PC-9 (cell line): ENCODE measurements at regions of chr3 and their contacts with region 1.

Region 1: DNA sequence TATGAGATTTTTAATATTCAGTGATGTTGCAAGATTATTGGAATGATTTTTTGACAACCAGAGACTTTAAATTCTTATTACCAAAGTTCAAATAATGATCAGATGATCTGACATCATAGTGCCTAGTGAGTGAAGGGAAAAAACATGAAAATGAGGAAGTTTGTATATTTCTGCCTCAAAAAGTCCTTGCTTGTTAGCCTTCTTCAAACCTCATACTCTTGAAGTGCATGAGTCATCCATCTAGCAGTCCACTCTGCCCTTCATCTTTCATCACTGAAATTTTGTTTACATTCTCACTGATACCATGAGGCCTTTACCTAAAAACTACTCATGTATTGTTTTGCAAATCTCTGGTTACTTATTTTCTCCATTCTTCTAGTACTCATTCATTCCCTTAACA is 23.9 kb upstream of the OR5H6 start:
- DNase-seq: no peak
- H3K4me3 ChIP-seq: no peak overlapping the region
- H3K27ac ChIP-seq: no peak overlapping the region
- H3K4me1 ChIP-seq: peaks cover 8% of the 10 kb centered on the region
- H3K27me3 ChIP-seq: no peaks in the 10 kb centered on the region
- CTCF ChIP-seq: no peak

Region 2: GRCh38 chr3:97967966-97968365 is 272.2 kb before region 1 on chr3:
- CTCF ChIA-PET with region 1: no interaction called
- POLR2A ChIA-PET with region 1: no interaction called
- intact Hi-C with region 1: no loop called
- DNase-seq: no peak
- H3K4me3 ChIP-seq: no peak overlapping the region
- H3K27ac ChIP-seq: no peak overlapping the region
- H3K4me1 ChIP-seq: peaks cover 32% of the 10 kb centered on the region
- H3K27me3 ChIP-seq: no peaks in the 10 kb centered on the region
- CTCF ChIP-seq: 0 out of 2 replicates have a peak, but pooled peaks have one; percentile 22

Region 3: DNA sequence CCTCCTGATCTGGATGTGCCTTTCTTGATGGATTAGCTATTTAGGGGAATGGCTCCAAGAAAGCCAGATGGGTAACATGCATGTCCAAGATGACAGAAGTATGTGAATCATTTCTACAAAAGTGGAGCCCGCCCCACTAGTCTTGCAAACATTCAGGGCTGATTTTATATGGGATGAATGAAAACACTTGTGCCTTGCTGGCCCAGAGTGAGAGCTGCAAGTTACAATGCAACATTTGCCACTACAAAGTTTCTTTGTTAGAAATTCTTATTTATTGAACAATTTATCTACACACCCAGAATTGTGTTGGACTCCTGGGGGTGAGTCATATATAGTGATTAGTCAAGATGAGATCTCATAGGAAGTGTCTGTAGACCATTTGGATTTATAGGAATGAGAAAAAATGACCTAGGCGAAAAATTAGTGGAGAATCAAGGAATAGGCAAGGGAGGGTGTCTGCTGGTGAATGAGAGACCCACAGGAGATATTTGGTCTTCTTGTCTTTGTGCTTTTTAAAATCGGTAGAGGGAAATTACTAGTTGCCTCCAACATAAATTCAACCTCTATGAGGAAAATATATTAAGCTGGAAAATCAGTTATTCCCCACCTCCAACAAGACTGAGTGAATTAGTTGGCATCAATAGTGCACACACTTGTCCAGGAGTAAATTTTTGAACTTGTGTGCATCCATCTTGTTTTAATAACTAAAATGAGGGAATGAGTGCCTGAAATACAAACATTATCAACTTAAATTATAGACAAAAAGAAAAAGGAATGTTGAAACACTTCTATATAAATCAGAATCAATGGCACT is 714.9 kb after region 1 on chr3:
- CTCF ChIA-PET with region 1: no interaction called
- POLR2A ChIA-PET with region 1: interaction called, 12 read pairs
- intact Hi-C with region 1: no loop called
- DNase-seq: no peak
- H3K4me3 ChIP-seq: no peak overlapping the region
- H3K27ac ChIP-seq: no peak overlapping the region
- H3K4me1 ChIP-seq: peaks cover 13% of the 10 kb centered on the region
- H3K27me3 ChIP-seq: no peaks in the 10 kb centered on the region
- CTCF ChIP-seq: no peak